A549 (cell line): ENCODE measurements at regions of chr12 and their contacts with region 1.

Region 1: DNA sequence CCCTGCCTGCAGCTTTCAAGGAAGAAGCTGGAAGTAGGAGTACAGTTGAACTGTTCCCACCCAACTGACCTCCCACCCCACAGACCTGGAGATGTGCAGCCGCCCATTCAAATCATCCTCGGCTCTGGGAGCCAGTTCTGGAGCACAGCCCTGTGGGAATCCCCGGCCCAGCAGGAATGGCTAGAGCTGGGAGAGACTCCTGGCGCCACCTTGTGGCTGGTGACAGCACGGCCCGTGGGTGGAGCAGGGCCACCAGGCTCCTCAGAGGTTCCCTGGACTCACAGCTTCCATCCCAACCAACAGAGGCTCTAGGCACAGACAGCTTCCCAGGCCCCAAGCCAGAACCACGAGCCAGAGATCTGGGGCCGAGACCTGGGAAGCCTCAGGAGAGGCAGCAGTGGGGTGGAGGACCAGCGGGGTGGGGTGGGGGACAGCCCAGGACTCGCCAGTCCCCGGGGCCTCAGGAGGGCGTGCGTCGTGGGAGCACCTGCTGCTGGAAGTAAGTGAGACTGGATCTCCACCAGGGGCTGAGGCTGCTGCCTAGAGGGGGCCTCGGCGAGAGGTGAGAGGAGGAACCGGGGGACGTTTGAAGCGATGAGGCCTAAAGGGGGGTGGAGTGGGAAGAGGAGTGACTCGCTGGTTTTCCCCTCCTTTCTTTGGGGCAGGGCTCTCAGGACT is 43.4 kb downstream of the RNF34 start:
- DNase-seq: peak; percentile 81 to 97
- ATAC-seq: peak; percentile 91 to 97
- H3K4me3 ChIP-seq: no peak overlapping the region
- H3K27ac ChIP-seq: peak overlapping the region in 1 of 2 experiments; percentile 52; a peak in 2 of 6 replicates
- H3K4me1 ChIP-seq: peaks cover 4% of the 10 kb centered on the region; the same call in 1 of the 3 replicates
- CTCF ChIP-seq: peak; percentile 84
- EP300 ChIP-seq: no peak
- POLR2A ChIP-seq: no peak
- RAD21 ChIP-seq: peak; percentile 76 to 84

Region 2: GRCh38 chr12:121334513-121335343 is 108.6 kb before region 1 on chr12:
- CTCF ChIA-PET with region 1: interaction called, 117 read pairs
- POLR2A ChIA-PET with region 1: no interaction called
- DNase-seq: peak; percentile 75 to 85
- ATAC-seq: peak; percentile 97 to 98
- H3K4me3 ChIP-seq: no peak overlapping the region
- H3K27ac ChIP-seq: no peak overlapping the region
- H3K4me1 ChIP-seq: peaks cover 5% of the 10 kb centered on the region; the same call in 1 of the 3 replicates
- CTCF ChIP-seq: peak; percentile 88
- EP300 ChIP-seq: no peak
- POLR2A ChIP-seq: no peak
- RAD21 ChIP-seq: peak; percentile 55 to 66

Region 3: GRCh38 chr12:121399391-121400331 is 43.7 kb before region 1 on chr12 and contains the start of gene RNF34:
- CTCF ChIA-PET with region 1: interaction called, 14 read pairs
- POLR2A ChIA-PET with region 1: interaction called, 3 read pairs
- DNase-seq: peak; percentile 93 to 99
- ATAC-seq: peak; percentile 96 to 97
- H3K4me3 ChIP-seq: peak within 1 kb of the TSS; percentile 84
- H3K27ac ChIP-seq: peak within 1 kb of the TSS; percentile 94 to 96
- H3K4me1 ChIP-seq: peaks cover 19% of the 10 kb centered on the region
- CTCF ChIP-seq: no peak
- EP300 ChIP-seq: no peak
- POLR2A ChIP-seq: peak; percentile 98
- RAD21 ChIP-seq: no peak
- polyA plus RNA-seq, gene RNF34: 59.4 and 94.4 TPM in 2 replicates

Region 4: DNA sequence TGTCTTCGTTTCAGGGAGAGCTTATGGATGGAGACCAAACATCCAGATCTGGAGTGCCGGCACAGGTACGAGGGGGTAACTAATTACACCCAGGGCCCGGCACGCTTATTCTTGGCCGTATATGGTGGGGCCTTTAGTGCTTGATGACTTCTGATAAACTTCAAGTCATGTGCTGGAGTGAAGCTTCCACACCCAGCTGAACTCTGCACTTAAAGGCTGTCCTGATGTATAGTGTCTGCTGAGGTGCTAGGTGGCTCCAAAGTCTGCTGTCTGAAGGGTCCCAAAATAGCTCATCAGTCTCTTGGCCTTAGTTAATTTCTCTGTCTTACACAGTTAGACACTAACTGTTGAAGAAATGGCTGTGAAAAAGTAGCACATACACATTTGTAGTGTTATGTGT is 25.5 kb before region 1 on chr12:
- CTCF ChIA-PET with region 1: interaction called, 79 read pairs
- POLR2A ChIA-PET with region 1: no interaction called
- DNase-seq: no peak
- ATAC-seq: no peak
- H3K4me3 ChIP-seq: no peak overlapping the region
- H3K27ac ChIP-seq: no peak overlapping the region
- H3K4me1 ChIP-seq: no peaks in the 10 kb centered on the region
- CTCF ChIP-seq: no peak
- EP300 ChIP-seq: no peak
- POLR2A ChIP-seq: no peak
- RAD21 ChIP-seq: no peak

Region 5: GRCh38 chr12:121423682-121424623 is 19.4 kb before region 1 on chr12:
- CTCF ChIA-PET with region 1: interaction called, 79 read pairs
- POLR2A ChIA-PET with region 1: interaction called, 3 read pairs
- DNase-seq: no peak
- ATAC-seq: no peak
- H3K4me3 ChIP-seq: no peak overlapping the region
- H3K27ac ChIP-seq: no peak overlapping the region
- H3K4me1 ChIP-seq: no peaks in the 10 kb centered on the region
- CTCF ChIP-seq: no peak
- EP300 ChIP-seq: no peak
- POLR2A ChIP-seq: no peak
- RAD21 ChIP-seq: no peak

Region 6: GRCh38 chr12:121432740-121433480 is 10.4 kb before region 1 on chr12:
- CTCF ChIA-PET with region 1: interaction called, 79 read pairs
- POLR2A ChIA-PET with region 1: no interaction called
- DNase-seq: no peak
- ATAC-seq: peak in 1 of 2 experiments; percentile 28; a peak in 3 of 6 replicates
- H3K4me3 ChIP-seq: no peak overlapping the region
- H3K27ac ChIP-seq: no peak overlapping the region
- H3K4me1 ChIP-seq: no peaks in the 10 kb centered on the region
- CTCF ChIP-seq: no peak
- EP300 ChIP-seq: no peak
- POLR2A ChIP-seq: no peak
- RAD21 ChIP-seq: no peak

Region 7: GRCh38 chr12:121467115-121467793 is 23.9 kb after region 1 on chr12:
- CTCF ChIA-PET with region 1: interaction called, 40 read pairs
- POLR2A ChIA-PET with region 1: no interaction called
- DNase-seq: peak; percentile 83 to 88
- ATAC-seq: peak; percentile 90 to 95
- H3K4me3 ChIP-seq: peak overlapping the region; percentile 67
- H3K27ac ChIP-seq: peak overlapping the region; percentile 79 to 93
- H3K4me1 ChIP-seq: peaks cover 9% of the 10 kb centered on the region
- CTCF ChIP-seq: no peak
- EP300 ChIP-seq: no peak
- POLR2A ChIP-seq: peak; percentile 65
- RAD21 ChIP-seq: no peak